PC-9 (cell line): ENCODE measurements at regions of chr3 and their contacts with region 1.

Region 1: GRCh38 chr3:127074728-127075360 is 91.9 kb downstream of the PLXNA1 start:
- DNase-seq: peak; percentile 51 to 59
- H3K4me3 ChIP-seq: no peak overlapping the region
- H3K27ac ChIP-seq: peak overlapping the region; percentile 46; the same call in 1 of the 2 replicates
- H3K4me1 ChIP-seq: peaks cover 34% of the 10 kb centered on the region
- H3K27me3 ChIP-seq: 0 out of 2 replicates have a peak, but pooled peaks cover 3% of the 10 kb centered on the region
- CTCF ChIP-seq: no peak

Region 2: DNA sequence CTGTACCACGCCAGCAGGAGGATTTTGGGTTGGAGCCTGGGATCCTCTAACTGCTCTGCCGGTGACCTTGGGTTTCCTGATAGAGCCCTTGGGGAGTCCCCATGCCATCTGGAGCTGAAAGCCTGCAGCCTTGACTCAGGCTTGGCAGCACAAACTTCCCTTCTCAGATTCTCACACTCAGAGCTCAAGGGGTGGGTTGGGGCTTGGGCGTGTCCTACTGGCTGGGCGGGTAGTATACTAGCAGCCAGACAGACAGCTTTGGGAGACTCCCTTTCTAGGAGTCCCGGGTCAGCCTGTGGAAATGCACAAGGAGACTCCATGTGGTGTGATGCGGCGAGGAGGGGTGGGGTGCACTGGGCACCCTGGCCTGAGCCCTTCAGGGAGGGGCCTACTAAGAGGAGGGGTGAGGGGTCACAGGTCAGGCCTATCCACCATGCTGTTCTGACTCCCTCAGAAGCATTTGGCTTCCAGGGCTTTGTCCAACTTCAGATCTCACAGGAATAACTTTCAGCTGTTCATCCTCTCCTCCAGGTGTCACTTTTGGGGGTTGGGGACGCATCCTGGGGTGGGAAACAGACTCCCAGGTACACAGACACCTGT is 113.6 kb before region 1 on chr3:
- CTCF ChIA-PET with region 1: no interaction called
- POLR2A ChIA-PET with region 1: interaction called, 5 read pairs
- intact Hi-C with region 1: loop called (anchors 1 kb)
- DNase-seq: peak; percentile 41 to 68
- H3K4me3 ChIP-seq: no peak overlapping the region
- H3K27ac ChIP-seq: peak overlapping the region; percentile 35
- H3K4me1 ChIP-seq: peaks cover 49% of the 10 kb centered on the region
- H3K27me3 ChIP-seq: no peaks in the 10 kb centered on the region
- CTCF ChIP-seq: no peak

Region 3: DNA sequence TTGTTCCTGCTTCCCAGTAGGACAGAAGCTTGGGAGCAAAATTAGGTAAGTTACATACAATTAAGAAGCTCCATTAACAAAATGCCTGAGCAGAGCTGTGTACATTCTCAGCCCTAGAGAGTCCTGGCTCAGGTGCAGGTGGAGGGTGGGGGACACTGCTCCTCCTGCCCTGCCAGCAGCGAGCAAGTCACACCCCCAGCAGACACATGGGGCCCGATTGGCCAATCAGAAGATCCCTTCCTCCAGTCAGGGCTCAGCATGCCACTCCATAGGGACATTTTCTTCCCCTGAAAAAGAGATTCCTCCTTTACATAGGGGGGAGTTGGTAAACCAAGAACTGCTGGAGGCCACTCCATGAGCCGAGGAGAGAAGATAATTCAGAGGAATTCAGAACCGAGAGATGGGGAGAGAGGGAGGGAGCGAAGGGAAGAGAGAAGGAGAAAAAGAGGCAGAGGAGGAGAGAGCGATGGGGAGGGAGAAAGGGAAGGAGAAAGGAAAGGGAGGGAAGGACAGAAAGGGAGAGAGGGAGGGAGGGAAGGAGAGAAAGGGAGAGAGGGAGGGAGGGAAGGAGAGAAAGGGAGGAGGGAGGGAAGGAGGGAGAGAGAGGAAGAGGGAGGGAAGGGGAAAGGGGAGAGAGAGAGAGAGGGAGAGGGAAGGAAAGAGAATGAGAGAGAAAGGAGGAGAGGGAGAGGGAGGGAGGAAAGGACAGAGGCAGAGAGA is 29.7 kb before region 1 on chr3:
- CTCF ChIA-PET with region 1: interaction called, 3 read pairs
- POLR2A ChIA-PET with region 1: interaction called, 17 read pairs
- intact Hi-C with region 1: loop called (anchors 1 kb)
- DNase-seq: peak in 1 of 2 experiments; percentile 56
- H3K4me3 ChIP-seq: no peak overlapping the region
- H3K27ac ChIP-seq: no peak overlapping the region
- H3K4me1 ChIP-seq: peaks cover 26% of the 10 kb centered on the region
- H3K27me3 ChIP-seq: peaks cover 4% of the 10 kb centered on the region; the same call in 1 of the 2 replicates
- CTCF ChIP-seq: no peak

Region 4: GRCh38 chr3:127316685-127317084 is 241.8 kb after region 1 on chr3:
- CTCF ChIA-PET with region 1: no interaction called
- POLR2A ChIA-PET with region 1: interaction called, 14 read pairs
- intact Hi-C with region 1: no loop called
- DNase-seq: no peak
- H3K4me3 ChIP-seq: no peak overlapping the region
- H3K27ac ChIP-seq: no peak overlapping the region
- H3K4me1 ChIP-seq: no peaks in the 10 kb centered on the region
- H3K27me3 ChIP-seq: peaks cover 37% of the 10 kb centered on the region
- CTCF ChIP-seq: no peak

Region 5: DNA sequence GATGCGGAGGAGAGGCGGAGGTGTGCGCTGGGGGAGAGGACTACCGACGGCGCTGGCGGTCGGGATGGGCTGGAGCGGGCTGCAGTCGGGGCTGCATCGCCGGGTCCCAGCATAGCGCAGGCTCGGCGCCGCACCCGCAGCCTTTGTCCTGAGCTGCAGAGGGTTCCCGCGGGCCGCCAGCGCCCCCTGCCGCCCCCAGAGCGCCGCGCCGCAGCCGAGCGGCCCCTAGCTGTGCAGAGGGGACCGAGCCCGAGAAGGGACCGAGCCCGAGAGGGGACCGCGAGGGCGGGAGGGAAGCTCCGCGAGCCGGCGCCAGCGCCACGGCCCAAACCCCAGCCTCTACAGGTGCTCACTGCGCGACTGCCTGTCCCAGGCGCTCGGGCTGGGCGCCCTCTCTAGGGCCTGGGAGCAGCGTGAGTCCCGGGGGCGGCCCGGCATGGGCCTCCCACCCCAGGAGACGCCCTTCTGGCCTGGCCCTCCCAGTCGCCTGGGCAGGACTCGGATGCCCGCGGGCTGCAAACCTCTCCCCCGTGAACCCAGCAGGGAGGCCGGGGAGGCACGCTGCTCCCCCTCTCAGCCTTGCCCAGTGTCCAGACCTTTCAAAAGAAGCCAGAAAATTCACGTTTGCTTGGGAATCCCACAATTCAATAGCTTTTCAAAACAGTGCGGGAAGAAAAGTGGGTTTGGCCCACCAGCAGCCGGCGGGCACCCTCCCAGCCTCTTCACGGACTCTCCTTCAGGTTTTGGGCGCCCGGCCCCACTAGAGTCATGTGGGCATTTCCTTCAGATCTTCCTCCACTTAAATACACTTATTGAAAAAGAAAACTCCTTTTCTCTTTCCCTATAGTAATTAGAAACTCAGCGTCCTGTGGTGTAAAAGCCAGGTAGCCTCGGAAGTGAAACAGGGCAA is 381.0 kb after region 1 on chr3:
- CTCF ChIA-PET with region 1: interaction called, 3 read pairs
- POLR2A ChIA-PET with region 1: no interaction called
- intact Hi-C with region 1: loop called (anchors 10 kb)
- DNase-seq: peak in 1 of 2 experiments; percentile 90
- H3K4me3 ChIP-seq: peak overlapping the region; percentile 39; the same call in 1 of the 2 replicates
- H3K27ac ChIP-seq: no peak overlapping the region
- H3K4me1 ChIP-seq: peaks cover 11% of the 10 kb centered on the region
- H3K27me3 ChIP-seq: peaks cover 60% of the 10 kb centered on the region
- CTCF ChIP-seq: peak; percentile 82